Natural killer cell (primary cell): ENCODE measurements at regions of chr19 and their contacts with region 1.

Region 1: GRCh38 chr19:6424939-6425731 is 524 bp upstream of the KHSRP start:
- DNase-seq: peak; percentile 97 to 99
- ATAC-seq: peak; percentile 82 to 93 (median 82)
- H3K4me3 ChIP-seq: peak overlapping the region; percentile 40
- H3K4me3 Mint-ChIP-seq: peak overlapping the region; percentile 82
- H3K27ac ChIP-seq: peak overlapping the region; percentile 96
- H3K27ac Mint-ChIP-seq: peak overlapping the region; percentile 85 to 86
- H3K4me1 ChIP-seq: peaks cover 36% of the 10 kb centered on the region
- H3K4me1 Mint-ChIP-seq: peaks cover 30 to 45% of the 10 kb centered on the region in 2 donors
- H3K27me3 ChIP-seq: no peaks in the 10 kb centered on the region
- H3K27me3 Mint-ChIP-seq: peaks cover 0 to 2% of the 10 kb centered on the region in 2 donors
- CTCF ChIP-seq: no peak

Region 2: GRCh38 chr19:6362027-6362350 is 63.1 kb before region 1 on chr19:
- intact Hi-C with region 1: loop called (anchors 2 kb)
- DNase-seq: no peak
- ATAC-seq: no peak
- H3K4me3 ChIP-seq: peak overlapping the region; percentile 74
- H3K4me3 Mint-ChIP-seq: peak overlapping the region; percentile 89
- H3K27ac ChIP-seq: peak overlapping the region; percentile 84
- H3K27ac Mint-ChIP-seq: peak overlapping the region; percentile 78 to 96
- H3K4me1 ChIP-seq: peaks cover 26% of the 10 kb centered on the region
- H3K4me1 Mint-ChIP-seq: peaks cover 4 to 12% of the 10 kb centered on the region in 2 donors
- H3K27me3 ChIP-seq: no peaks in the 10 kb centered on the region
- H3K27me3 Mint-ChIP-seq: peaks cover 0 to 3% of the 10 kb centered on the region in 2 donors
- CTCF ChIP-seq: no peak

Region 3: GRCh38 chr19:6372594-6373095 is 52.5 kb before region 1 on chr19 and contains the start of gene ALKBH7:
- intact Hi-C with region 1: loop called (anchors 1 kb)
- DNase-seq: peak; percentile 92 to 100
- ATAC-seq: peak; percentile 77 to 89 (median 80)
- H3K4me3 ChIP-seq: peak within 1 kb of the TSS; percentile 79
- H3K4me3 Mint-ChIP-seq: peak within 1 kb of the TSS; percentile 91
- H3K27ac ChIP-seq: peak within 1 kb of the TSS; percentile 97
- H3K27ac Mint-ChIP-seq: peak within 1 kb of the TSS; percentile 88 to 97
- H3K4me1 ChIP-seq: peaks cover 15% of the 10 kb centered on the region
- H3K4me1 Mint-ChIP-seq: peaks cover 15 to 25% of the 10 kb centered on the region in 2 donors
- H3K27me3 ChIP-seq: no peaks in the 10 kb centered on the region
- H3K27me3 Mint-ChIP-seq: no peaks in the 10 kb centered on the region
- CTCF ChIP-seq: no peak
- total RNA-seq, gene ALKBH7: 23.7 to 30.4 (median 25.9) TPM

Region 4: GRCh38 chr19:6393074-6393983 is 31.8 kb before region 1 on chr19 and contains the start of gene GTF2F1:
- intact Hi-C with region 1: loop called (anchors 1 kb)
- DNase-seq: peak; percentile 89 to 98
- ATAC-seq: peak; percentile 86 to 91 (median 87)
- H3K4me3 ChIP-seq: peak within 1 kb of the TSS; percentile 89
- H3K4me3 Mint-ChIP-seq: peak within 1 kb of the TSS; percentile 97
- H3K27ac ChIP-seq: peak within 1 kb of the TSS; percentile 96
- H3K27ac Mint-ChIP-seq: peak within 1 kb of the TSS; percentile 96 to 97
- H3K4me1 ChIP-seq: peaks cover 18% of the 10 kb centered on the region
- H3K4me1 Mint-ChIP-seq: peaks cover 23 to 30% of the 10 kb centered on the region in 2 donors
- H3K27me3 ChIP-seq: no peaks in the 10 kb centered on the region
- H3K27me3 Mint-ChIP-seq: no peaks in the 10 kb centered on the region
- CTCF ChIP-seq: no peak
- total RNA-seq, gene GTF2F1: 56.6 to 63.9 (median 63.9) TPM

Region 5: DNA sequence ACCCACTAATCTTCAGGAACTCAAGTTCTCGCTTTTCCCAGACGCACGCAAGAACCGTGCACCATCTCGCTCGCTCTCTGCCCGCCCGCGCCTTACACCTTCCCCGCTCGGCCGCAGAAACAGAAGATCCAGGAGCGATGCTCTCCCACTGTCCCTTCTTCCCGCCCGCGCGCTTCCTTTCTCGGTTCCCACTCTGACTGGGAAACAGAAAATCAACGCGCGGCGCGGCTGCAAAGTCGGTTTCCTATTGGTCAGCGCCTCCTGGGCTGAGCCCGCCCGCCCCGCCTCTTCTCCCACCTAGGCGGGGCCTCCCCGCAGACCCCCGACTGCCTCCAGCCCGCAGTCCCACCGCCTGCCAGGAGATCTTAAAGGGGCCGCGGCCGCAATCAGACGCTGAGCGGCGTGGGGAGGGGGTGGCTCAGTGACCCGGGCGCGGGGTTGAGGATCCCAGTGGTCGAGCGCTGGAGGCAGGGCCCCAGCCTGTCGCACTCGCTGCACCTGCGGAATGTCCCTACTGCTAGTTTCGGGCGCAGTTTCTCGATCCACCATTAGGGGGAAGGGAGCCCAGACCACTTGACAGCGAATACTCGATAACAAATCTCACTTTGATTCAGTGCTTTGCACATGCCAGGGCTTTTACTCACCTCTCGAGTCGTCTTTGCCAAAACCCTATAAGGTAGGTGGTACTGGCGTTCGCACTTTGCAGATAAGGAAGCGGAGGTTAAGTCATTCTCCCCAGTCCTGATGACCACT is 35.1 kb after region 1 on chr19:
- intact Hi-C with region 1: loop called (anchors 1 kb)
- DNase-seq: peak; percentile 92 to 97
- ATAC-seq: peak; percentile 83 to 91 (median 87)
- H3K4me3 ChIP-seq: peak overlapping the region; percentile 71
- H3K4me3 Mint-ChIP-seq: peak overlapping the region; percentile 99
- H3K27ac ChIP-seq: peak overlapping the region; percentile 81
- H3K27ac Mint-ChIP-seq: peak overlapping the region; percentile 91 to 95
- H3K4me1 ChIP-seq: peaks cover 30% of the 10 kb centered on the region
- H3K4me1 Mint-ChIP-seq: peaks cover 18 to 27% of the 10 kb centered on the region in 2 donors
- H3K27me3 ChIP-seq: peaks cover 6% of the 10 kb centered on the region
- H3K27me3 Mint-ChIP-seq: peaks cover 0 to 6% of the 10 kb centered on the region in 2 donors
- CTCF ChIP-seq: peak; percentile 72